Keratinocyte (primary cell): ENCODE measurements at regions of chr1 and their contacts with region 1.

Region 1: GRCh38 chr1:8314346-8315280 is 3.3 kb upstream of the SLC45A1 start:
- DNase-seq: no peak
- H3K4me3 ChIP-seq: no peak overlapping the region
- H3K27ac ChIP-seq: no peak overlapping the region
- H3K4me1 ChIP-seq: no peaks in the 10 kb centered on the region
- H3K27me3 ChIP-seq: peaks cover 10% of the 10 kb centered on the region
- CTCF ChIP-seq: peak; percentile 88 to 99 (median 97)

Region 2: DNA sequence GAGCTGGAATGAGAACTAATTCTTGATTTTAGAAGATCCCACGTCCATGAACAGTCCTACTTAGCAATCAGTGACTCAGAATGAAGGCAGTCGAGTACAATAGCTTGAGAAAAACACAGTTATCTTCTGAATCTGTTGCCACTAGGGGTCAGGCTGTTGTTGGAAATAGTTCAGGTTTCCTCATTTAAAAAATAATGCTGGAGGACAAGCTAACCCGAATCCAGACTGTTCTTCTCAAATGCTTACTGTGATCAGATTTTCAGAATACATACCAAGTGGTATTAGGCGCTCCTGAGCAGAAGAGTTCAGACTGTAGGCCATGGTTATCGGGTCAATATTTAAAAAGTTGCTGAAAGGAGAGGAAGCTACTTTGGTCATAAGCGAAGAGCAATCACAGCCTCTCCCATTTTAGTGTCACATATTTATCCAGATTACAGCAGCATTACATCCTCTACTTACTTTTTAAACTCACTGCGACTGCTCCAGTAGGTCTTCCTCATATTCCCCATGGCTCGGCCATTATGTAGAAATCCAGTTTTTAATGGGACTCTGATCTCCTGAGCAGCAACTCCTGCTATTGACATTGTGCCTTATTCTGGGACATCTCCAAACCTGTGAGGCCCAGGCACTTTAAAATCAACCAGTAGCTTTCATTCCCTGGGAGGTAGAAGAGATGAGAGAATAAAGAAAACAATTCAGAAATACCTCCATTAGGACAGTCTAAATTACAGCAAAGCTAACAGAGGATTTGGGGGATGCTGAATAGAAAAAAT is 299.4 kb before region 1 on chr1:
- dilution Hi-C with region 1: loop called (anchors 25 kb)
- DNase-seq: no peak
- H3K4me3 ChIP-seq: peak overlapping the region in 1 of 3 experiments; percentile 6
- H3K27ac ChIP-seq: peak overlapping the region; percentile 59
- H3K4me1 ChIP-seq: peaks cover 65% of the 10 kb centered on the region
- H3K27me3 ChIP-seq: no peaks in the 10 kb centered on the region
- CTCF ChIP-seq: peak; percentile 45 to 79 (median 50)